Sigmoid colon (tissue), 7 donors: ENCODE measurements at regions of chr1 and their contacts with region 1.

Region 1: DNA sequence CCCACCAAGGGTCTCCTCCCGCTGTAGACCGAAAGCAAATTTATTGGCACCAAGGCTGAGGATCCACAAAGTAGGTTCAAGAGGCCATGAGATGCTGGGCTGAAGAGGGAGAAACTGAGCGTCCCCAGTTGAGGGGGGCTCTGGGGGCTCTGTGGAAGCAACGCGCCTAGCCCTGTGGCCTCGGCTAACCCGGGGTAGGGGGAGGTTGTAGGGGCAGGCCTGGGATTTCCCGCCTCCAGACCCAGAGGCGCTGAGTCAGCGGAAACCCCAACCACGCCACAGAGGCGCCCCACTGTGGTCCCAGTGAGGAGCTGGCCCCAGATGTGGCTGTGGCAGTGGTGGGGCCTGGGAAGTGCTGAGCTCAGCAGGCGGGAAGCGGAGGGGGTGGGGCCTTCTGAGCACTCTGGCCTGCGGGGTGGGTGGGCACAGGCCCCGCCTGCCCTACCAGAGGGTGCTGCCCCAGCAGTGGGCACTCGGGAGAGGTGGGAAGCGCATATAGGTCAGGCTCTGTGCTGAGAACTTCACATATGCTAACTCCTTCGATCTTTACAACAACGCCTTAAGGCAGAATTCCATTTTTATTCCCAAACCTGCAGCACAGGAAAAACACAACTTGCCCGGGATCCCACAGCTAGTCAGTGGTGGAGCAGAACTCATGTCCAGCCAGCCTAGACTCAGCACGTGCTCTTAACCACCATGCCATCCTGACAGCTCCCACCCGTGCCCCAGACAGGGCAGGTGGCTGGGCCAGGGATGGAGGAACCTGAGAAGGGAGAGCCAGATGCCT is 1.5 kb upstream of the COL16A1 start:
- DNase-seq: peak; percentile 90
- H3K4me3 ChIP-seq: peak overlapping the region in 3 of 4 donors; percentile 45 to 59 (median 56)
- H3K27ac ChIP-seq: peak overlapping the region; percentile 82 to 92 (median 90)
- H3K4me1 ChIP-seq: peaks cover 0 to 55% (median 53%) of the 10 kb centered on the region in 4 donors
- H3K27me3 ChIP-seq: no peaks in the 10 kb centered on the region
- CTCF ChIP-seq: peak; percentile 9 to 54 (median 33)
- EP300 ChIP-seq: no peak
- POLR2A ChIP-seq: no peak

Region 2: DNA sequence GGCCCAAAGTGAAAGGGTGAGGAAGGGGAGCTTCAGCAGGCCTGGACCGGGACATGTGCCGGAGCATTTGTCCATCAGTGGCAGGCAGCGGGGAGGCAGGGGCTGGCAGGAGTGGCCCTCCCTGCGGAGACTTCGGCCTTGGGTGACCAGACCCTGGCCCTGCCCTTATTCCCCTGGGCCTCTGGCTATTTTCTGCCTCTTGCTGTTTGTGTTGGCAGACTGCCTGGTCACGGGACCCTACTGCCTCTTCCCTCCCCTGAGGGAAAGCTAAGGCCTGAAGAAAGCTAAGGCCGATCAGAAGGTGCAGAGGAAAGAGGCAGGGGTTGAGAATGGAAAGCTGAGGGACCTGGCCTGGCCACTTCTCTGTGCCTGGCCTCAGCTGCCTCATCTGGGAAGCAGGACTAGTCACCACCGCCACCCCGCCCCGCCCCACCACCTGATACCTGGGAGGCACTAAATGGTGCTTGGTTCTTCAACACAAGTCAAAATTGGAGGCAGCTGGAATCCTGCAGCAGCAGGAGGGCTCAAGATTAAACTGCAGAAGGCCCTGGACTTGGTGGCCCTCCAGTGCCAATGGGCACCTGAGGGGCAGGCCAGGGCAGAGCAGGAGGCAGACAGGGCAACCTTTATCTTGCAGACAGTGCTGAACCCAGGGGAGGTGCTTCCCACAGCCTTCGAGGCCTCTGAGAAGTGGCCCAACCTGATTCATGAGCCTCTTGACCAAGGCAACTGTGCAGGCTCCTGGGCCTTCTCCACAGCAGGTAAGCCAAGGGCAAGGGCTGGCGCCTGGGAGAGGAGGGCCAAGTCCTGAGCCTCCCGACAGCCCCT is 121.0 kb before region 1 on chr1:
- intact Hi-C with region 1: loop called (anchors 5 kb)
- DNase-seq: peak; percentile 95
- H3K4me3 ChIP-seq: no peak overlapping the region
- H3K27ac ChIP-seq: peak overlapping the region; percentile 94 to 98 (median 96)
- H3K4me1 ChIP-seq: peaks cover 0 to 100% (median 96%) of the 10 kb centered on the region in 4 donors
- H3K27me3 ChIP-seq: no peaks in the 10 kb centered on the region
- CTCF ChIP-seq: no peak
- EP300 ChIP-seq: peak in 2 of 4 donors; percentile 62 to 69
- POLR2A ChIP-seq: no peak

Region 3: DNA sequence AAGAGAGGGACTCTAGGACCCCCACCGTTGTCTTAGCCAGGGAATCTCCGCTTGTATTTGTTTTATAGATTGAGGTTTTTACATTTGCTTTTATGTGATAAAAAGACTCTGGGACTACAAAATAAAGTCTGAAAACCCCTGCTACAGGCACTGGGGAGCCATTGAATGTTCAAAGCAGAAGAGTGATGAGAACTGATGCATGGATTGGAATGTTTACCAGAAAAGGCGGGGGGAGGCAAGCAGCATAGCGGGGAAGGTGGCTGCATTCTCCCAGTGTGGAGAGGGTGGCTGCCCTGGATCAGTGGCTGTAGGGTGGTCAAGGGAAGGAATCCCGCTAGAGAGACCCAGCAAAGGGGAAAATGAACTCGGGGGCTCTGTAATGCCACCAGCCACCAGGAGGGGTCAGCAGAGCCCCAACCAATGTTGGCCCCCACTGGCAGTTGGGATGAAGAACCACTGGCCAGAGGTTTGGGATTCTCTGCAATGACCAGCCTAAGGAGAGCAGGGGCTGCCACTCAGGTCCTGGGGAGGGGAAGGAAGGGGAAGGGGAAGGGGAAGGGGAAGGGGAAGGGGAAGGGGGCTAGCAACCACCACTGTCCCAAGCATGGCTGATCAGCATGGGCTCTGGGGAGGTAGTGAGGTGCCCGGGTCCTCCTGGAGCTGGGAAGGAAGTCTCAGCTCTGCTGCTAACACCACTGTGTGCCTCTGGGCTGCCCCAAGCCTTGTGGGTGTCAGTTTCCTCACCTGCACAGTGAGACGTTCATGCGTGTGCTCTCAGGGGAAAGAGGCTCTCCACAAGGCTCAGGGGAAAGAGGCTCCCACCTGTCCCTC is 41.4 kb before region 1 on chr1:
- intact Hi-C with region 1: loop called (anchors 1 kb)
- DNase-seq: peak; percentile 82
- H3K4me3 ChIP-seq: no peak overlapping the region
- H3K27ac ChIP-seq: no peak overlapping the region
- H3K4me1 ChIP-seq: peaks cover 0 to 34% (median 23%) of the 10 kb centered on the region in 4 donors
- H3K27me3 ChIP-seq: no peaks in the 10 kb centered on the region
- CTCF ChIP-seq: peak; percentile 95 to 99 (median 96)
- EP300 ChIP-seq: no peak
- POLR2A ChIP-seq: no peak

Region 4: DNA sequence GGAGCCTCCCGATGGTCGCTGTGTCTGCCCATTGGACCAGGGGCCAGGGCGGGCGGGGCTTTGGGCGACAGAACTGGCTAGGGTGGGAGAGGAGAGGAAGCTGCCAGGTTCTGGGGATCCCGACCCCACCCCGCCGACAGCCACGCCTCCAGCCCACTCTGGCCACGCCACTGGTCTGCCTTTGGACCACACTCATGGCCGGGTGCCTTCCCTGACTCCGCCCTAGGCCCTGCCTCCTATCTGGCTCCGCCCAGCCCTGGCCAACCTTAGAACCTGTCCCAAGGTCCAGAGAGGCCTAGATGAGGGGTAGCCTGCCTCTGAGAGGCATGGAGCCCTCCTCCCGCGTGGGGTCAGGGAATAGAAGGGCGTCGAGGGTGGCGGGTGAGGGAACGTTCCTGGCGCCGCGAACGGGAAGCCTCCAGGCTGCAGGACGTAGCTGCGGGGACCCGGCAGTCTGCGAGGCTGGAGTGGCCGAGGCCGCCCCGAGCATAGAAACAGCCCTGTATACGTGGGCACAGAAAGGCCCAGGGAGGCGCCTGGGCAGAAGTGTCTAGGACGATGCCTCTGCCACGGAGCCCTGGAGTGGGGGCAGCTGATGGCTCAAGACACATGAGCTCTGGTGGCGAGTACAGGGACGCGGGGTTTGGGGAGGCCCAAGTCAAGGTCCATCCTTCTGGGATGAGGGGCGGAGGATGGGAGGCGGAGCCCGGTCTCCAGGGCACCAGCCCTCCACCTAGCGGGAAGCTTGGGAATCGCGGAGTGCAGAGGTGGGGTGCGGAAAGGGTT is 10.0 kb after region 1 on chr1:
- intact Hi-C with region 1: loop called (anchors 2 kb)
- DNase-seq: peak; percentile 99
- H3K4me3 ChIP-seq: peak overlapping the region; percentile 20 to 47 (median 38)
- H3K27ac ChIP-seq: peak overlapping the region; percentile 87 to 98 (median 96)
- H3K4me1 ChIP-seq: peaks cover 0 to 56% (median 47%) of the 10 kb centered on the region in 4 donors
- H3K27me3 ChIP-seq: no peaks in the 10 kb centered on the region
- CTCF ChIP-seq: peak; percentile 89 to 97 (median 92)
- EP300 ChIP-seq: no peak
- POLR2A ChIP-seq: peak; percentile 23 to 45